Heart left ventricle (tissue), 16 donors: ENCODE measurements at regions of chrX and their contacts with region 1.

Region 1: DNA sequence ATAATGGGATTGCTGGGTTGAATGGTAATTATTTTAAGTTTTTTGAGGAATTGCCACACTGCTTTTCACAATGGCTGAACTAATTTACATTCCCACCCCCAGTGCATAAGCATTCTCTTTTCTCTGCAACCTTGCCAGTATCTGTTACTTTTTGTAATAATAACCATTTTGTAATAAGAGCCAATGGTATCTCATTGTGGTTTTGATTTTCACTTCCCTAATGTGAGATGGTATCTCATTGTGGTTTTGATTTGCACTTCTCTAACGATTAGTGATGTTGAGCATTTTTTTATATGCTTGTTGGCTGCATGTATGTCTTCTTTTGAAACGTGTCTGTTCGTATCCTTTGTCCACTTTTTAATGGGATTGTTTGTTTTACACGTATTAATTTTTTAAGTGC is 213.1 kb upstream of the HDX start:
- DNase-seq: no peak
- ATAC-seq: no peak
- H3K4me3 ChIP-seq: no peak overlapping the region
- H3K27ac ChIP-seq: no peak overlapping the region
- H3K4me1 ChIP-seq: no peaks in the 10 kb centered on the region
- H3K27me3 ChIP-seq: peaks cover 0 to 8% (median 0%) of the 10 kb centered on the region in 9 donors
- CTCF ChIP-seq: no peak
- POLR2A ChIP-seq: no peak

Region 2: GRCh38 chrX:85196319-85196718 is 481.0 kb after region 1 on chrX:
- intact Hi-C with region 1: loop called in 1 of 10 experiments (anchors 5 kb)
- DNase-seq: no peak
- ATAC-seq: no peak
- H3K4me3 ChIP-seq: no peak overlapping the region
- H3K27ac ChIP-seq: no peak overlapping the region
- H3K4me1 ChIP-seq: no peaks in the 10 kb centered on the region
- H3K27me3 ChIP-seq: no peaks in the 10 kb centered on the region
- CTCF ChIP-seq: no peak
- POLR2A ChIP-seq: no peak